PC-9 (cell line): ENCODE measurements at regions of chr10 and their contacts with region 1.

Region 1: DNA sequence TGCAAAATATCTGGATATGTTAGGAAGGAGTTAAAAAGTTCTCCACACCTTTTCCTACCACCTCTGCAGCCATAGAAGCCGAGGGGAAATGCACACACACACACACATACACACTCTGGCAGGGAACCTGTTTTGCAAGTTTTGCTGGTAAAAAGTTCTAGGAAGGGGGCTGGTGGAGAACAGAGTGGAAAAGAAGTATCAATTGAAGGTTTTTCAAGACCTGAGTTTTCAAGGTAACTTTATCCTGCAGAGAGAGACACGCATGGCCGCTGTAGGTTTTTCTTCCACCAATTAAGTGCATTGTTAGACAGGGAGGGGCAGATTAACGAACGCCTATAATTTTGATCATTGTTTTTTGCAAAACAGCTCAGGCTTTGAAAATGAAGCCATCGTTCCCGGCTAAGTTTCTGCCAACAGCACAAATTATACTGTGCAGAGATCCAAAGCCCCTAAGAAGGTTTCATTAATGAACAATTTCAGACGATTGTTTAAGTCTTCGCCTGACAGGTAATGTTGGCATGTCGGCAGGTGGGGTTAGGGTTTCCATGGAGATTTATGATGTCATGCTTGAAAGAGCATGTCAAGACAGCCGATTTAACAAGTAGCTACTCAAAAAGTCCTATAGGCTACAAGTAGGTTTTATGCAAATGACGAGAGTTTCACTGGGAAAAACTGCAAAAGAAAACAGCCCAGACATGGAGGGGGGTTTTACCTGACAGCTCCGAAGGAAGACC is 29.7 kb downstream of the KIAA1217 start:
- DNase-seq: peak; percentile 65 to 86
- H3K4me3 ChIP-seq: peak overlapping the region; percentile 63
- H3K27ac ChIP-seq: peak overlapping the region; percentile 55
- H3K4me1 ChIP-seq: peaks cover 19% of the 10 kb centered on the region
- H3K27me3 ChIP-seq: no peaks in the 10 kb centered on the region
- CTCF ChIP-seq: no peak

Region 2: DNA sequence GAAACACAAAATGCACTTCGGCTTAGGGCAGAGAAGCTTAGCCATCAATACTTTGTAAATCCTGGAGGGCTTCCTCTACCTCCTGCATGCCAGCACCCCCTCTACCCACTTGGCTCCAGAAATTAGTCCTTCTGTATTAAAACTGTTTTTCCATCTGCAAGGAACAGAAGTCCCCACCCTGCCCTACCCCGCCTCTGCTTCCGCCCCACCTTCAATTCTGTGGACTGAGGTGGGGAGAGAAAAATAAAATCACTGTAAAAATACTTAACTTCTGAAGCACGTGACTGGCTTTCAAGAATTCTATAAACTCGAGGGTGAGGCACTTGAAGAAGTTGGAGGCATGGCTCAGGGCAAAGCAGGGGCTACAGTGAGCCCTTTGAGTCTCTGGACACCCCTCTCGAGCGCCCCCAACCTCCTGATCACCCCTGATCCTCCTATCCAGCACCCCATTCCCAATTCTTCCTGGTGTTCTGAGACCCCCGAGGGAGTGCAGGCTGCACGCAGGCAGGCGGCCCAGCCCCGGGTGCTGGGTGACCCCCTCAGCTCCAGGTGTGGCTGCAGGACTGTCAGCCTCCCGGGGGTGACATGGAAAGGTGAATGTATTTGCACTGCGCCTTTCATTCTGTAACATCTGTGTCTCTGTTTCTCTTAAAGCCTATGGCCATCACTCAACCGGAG is 37.0 kb before region 1 on chr10:
- CTCF ChIA-PET with region 1: no interaction called
- POLR2A ChIA-PET with region 1: no interaction called
- intact Hi-C with region 1: loop called (anchors 5 kb)
- DNase-seq: no peak
- H3K4me3 ChIP-seq: no peak overlapping the region
- H3K27ac ChIP-seq: no peak overlapping the region
- H3K4me1 ChIP-seq: peaks cover 8% of the 10 kb centered on the region
- H3K27me3 ChIP-seq: no peaks in the 10 kb centered on the region
- CTCF ChIP-seq: no peak

Region 3: GRCh38 chr10:24249829-24250415 is 11.2 kb after region 1 on chr10:
- CTCF ChIA-PET with region 1: no interaction called
- POLR2A ChIA-PET with region 1: interaction called, 10 read pairs
- intact Hi-C with region 1: loop called (anchors 2 kb)
- DNase-seq: peak in 1 of 2 experiments; percentile 51
- H3K4me3 ChIP-seq: no peak overlapping the region
- H3K27ac ChIP-seq: 0 out of 2 replicates have a peak overlapping the region, but pooled peaks have one; percentile 17
- H3K4me1 ChIP-seq: peaks cover 40% of the 10 kb centered on the region
- H3K27me3 ChIP-seq: no peaks in the 10 kb centered on the region
- CTCF ChIP-seq: no peak

Region 4: GRCh38 chr10:24262931-24263590 is 24.4 kb after region 1 on chr10:
- CTCF ChIA-PET with region 1: no interaction called
- POLR2A ChIA-PET with region 1: no interaction called
- intact Hi-C with region 1: loop called (anchors 1 kb)
- DNase-seq: no peak
- H3K4me3 ChIP-seq: no peak overlapping the region
- H3K27ac ChIP-seq: no peak overlapping the region
- H3K4me1 ChIP-seq: peaks cover 13% of the 10 kb centered on the region
- H3K27me3 ChIP-seq: no peaks in the 10 kb centered on the region
- CTCF ChIP-seq: no peak

Region 5: DNA sequence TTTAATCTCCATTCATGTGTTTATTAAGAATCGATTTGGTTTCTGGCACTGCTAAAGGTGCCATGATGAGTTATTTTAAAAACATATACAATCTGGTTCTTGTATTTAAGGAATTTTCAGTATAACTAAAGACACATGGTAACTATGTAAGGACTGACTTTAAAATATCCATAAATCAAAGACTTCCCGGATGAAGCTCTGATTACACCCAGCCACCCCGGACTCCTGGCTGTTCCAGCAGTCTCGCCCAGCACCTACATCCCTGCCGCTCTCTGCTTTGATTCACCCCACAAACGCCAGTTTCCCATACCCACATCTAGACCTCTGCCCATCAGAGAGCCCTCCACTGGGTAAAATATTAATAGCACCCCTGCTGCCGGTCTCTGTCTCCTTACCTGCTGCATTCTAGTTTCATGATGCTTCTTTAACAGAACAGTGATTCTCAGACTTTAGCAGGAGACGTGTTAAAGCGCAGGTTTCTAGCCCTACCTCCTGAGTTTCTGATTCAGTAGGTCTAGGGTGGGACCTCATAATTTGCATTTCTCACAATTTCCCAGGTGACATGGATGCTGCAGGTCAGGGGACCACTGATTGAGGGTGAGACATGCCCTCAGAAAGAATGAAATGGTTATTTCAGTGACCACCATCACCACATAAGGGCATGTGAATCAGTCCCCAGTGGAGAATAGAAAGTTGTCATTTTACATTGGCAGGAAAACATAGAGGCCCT is 155.9 kb after region 1 on chr10:
- CTCF ChIA-PET with region 1: interaction called, 19 read pairs
- POLR2A ChIA-PET with region 1: no interaction called
- intact Hi-C with region 1: no loop called
- DNase-seq: no peak
- H3K4me3 ChIP-seq: no peak overlapping the region
- H3K27ac ChIP-seq: no peak overlapping the region
- H3K4me1 ChIP-seq: no peaks in the 10 kb centered on the region
- H3K27me3 ChIP-seq: no peaks in the 10 kb centered on the region
- CTCF ChIP-seq: no peak